MCF 10A (cell line): ENCODE measurements at regions of chr3 and their contacts with region 1.

Region 1: GRCh38 chr3:142279965-142280590 is 54.7 kb upstream of the GK5 start:
- DNase-seq: peak; percentile 89
- H3K4me3 Mint-ChIP-seq: no peak overlapping the region
- H3K27ac Mint-ChIP-seq: no peak overlapping the region
- H3K4me1 Mint-ChIP-seq: peaks cover 30% of the 10 kb centered on the region
- H3K27me3 Mint-ChIP-seq: no peaks in the 10 kb centered on the region
- CTCF ChIP-seq: peak; percentile 68

Region 2: GRCh38 chr3:141959921-141960554 is 320.0 kb before region 1 on chr3:
- CTCF ChIA-PET with region 1: interaction called, 6 read pairs
- POLR2A ChIA-PET with region 1: no interaction called
- intact Hi-C with region 1: loop called (anchors 1 kb)
- DNase-seq: peak; percentile 76
- H3K4me3 Mint-ChIP-seq: peak overlapping the region; percentile 10
- H3K27ac Mint-ChIP-seq: peak overlapping the region; percentile 87
- H3K4me1 Mint-ChIP-seq: peaks cover 12% of the 10 kb centered on the region
- H3K27me3 Mint-ChIP-seq: no peaks in the 10 kb centered on the region
- CTCF ChIP-seq: no peak

Region 3: DNA sequence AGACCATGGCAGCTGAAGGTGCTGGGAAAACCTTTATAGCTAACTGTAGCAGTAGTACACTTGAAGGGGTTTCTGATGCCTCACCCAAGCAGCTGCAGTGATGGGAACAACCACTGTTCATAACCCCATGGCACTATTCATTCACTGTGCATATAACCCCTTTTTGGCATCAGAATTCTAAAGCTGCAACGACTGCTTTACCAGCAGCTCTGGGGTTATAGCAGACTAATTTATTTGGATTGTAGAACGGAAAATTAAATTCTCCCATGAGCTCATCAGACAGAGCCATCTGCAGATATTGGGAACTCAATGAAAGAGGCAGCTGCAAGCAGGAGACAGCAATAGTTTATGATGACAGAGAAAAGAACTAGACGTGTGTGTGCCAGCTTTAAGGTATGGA is 159.4 kb before region 1 on chr3:
- CTCF ChIA-PET with region 1: interaction called, 74 read pairs
- POLR2A ChIA-PET with region 1: interaction called, 9 read pairs
- intact Hi-C with region 1: no loop called
- DNase-seq: no peak
- H3K4me3 Mint-ChIP-seq: no peak overlapping the region
- H3K27ac Mint-ChIP-seq: no peak overlapping the region
- H3K4me1 Mint-ChIP-seq: peaks cover 23% of the 10 kb centered on the region
- H3K27me3 Mint-ChIP-seq: no peaks in the 10 kb centered on the region
- CTCF ChIP-seq: no peak

Region 4: GRCh38 chr3:142175478-142175877 is 104.6 kb before region 1 on chr3:
- CTCF ChIA-PET with region 1: interaction called, 70 read pairs
- POLR2A ChIA-PET with region 1: no interaction called
- intact Hi-C with region 1: loop called (anchors 1 kb)
- DNase-seq: no peak
- H3K4me3 Mint-ChIP-seq: no peak overlapping the region
- H3K27ac Mint-ChIP-seq: peak overlapping the region; percentile 29
- H3K4me1 Mint-ChIP-seq: no peaks in the 10 kb centered on the region
- H3K27me3 Mint-ChIP-seq: no peaks in the 10 kb centered on the region
- CTCF ChIP-seq: no peak

Region 5: DNA sequence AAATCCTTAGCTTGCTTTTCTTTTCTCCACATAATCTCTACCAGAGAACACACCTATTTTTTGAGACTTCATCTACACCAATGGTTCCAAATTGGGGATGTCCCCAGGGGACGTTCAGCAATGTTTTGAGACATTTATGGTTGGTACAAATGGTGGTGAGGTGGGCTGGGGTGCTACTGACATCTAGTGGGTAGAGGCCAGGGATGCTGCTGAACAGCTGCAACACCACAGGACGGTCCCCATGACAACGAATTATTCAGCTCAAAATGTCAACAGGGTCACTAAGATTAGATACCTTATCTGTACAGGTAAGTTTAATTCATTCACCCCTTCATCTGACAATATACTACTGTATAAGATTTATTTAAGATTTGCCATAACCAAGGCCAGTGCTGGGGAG is 69.0 kb before region 1 on chr3:
- CTCF ChIA-PET with region 1: interaction called, 13 read pairs
- POLR2A ChIA-PET with region 1: interaction called, 11 read pairs
- intact Hi-C with region 1: loop called (anchors 5 kb)
- DNase-seq: no peak
- H3K4me3 Mint-ChIP-seq: no peak overlapping the region
- H3K27ac Mint-ChIP-seq: peak overlapping the region; percentile 99
- H3K4me1 Mint-ChIP-seq: peaks cover 25% of the 10 kb centered on the region
- H3K27me3 Mint-ChIP-seq: no peaks in the 10 kb centered on the region
- CTCF ChIP-seq: peak; percentile 10

Region 6: GRCh38 chr3:142296507-142296906 is 16.4 kb after region 1 on chr3:
- CTCF ChIA-PET with region 1: no interaction called
- POLR2A ChIA-PET with region 1: no interaction called
- intact Hi-C with region 1: no loop called
- DNase-seq: no peak
- H3K4me3 Mint-ChIP-seq: no peak overlapping the region
- H3K27ac Mint-ChIP-seq: no peak overlapping the region
- H3K4me1 Mint-ChIP-seq: no peaks in the 10 kb centered on the region
- H3K27me3 Mint-ChIP-seq: no peaks in the 10 kb centered on the region
- CTCF ChIP-seq: no peak

Region 7: DNA sequence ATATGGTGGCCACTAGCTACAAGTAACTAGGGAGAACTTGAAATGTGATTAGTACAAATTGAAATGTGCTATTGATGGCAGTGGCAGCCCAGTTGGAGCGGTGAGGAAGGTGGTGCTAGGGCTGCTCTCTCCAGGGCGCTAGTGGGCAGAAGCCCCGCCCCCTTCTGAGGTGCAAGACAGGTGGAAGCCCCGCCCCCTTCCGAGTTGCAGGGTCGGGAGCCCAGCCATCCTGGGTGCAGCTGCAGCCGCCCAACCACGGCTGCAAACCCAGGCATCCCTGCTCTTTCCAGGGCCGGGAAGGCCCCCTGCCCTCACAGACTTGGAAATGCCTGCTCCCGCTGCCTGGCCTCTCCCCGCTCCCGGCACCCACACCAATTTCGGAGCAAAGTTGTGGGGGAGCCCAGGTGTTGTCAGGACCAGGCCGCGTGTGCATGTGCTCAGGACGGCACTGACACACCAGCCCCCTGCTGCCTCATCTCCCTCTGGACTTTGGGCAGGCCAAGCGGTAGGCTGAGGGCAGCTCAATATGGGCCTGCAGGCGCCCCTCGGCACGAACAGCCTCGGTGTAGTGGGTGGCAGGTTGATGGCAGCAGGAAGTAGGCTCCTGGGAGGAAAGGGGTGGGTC is 288.4 kb after region 1 on chr3:
- CTCF ChIA-PET with region 1: no interaction called
- POLR2A ChIA-PET with region 1: no interaction called
- intact Hi-C with region 1: no loop called
- DNase-seq: no peak
- H3K4me3 Mint-ChIP-seq: no peak overlapping the region
- H3K27ac Mint-ChIP-seq: no peak overlapping the region
- H3K4me1 Mint-ChIP-seq: no peaks in the 10 kb centered on the region
- H3K27me3 Mint-ChIP-seq: no peaks in the 10 kb centered on the region
- CTCF ChIP-seq: no peak